ENCODE measurements at regions of chr22 and their contacts with region 1.

Region 1: DNA sequence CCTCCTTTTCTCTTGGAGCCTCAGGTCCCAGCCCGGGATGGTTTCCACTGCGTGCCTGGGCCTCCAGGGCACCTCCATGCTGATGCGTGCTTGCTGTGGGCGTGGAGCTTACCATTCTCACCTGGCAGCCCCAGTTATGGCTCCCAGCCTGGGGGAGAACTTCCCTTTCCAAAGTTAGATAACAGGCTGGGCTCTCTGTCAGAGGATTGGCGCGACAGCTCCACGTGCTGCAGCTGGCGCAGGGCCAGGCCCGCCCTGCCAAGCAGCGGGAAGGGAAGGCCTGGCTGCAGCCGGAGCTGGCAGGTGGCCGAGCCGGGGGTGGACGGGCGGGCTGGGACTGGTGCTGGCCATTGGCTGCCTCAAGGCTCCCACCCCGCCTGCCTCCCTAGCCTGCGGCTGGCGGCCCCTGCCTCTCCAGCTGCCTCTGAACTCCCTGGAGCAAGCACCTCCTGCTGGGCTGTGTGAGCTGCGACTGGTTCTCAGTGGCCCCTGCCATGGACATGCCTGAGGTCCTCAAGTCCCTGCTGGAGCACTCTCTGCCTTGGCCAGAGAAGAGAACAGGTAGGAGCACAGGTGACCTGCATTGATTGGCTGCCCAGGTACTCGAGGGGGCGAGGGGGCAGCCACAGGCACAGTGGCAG is 14.6 kb upstream of the TEF start:
- DNase-seq: peak; percentile 96 to 99 (median 98)
- H3K4me3 ChIP-seq: peak overlapping the region; percentile 44 to 90 (median 73)
- H3K27ac ChIP-seq: peak overlapping the region; percentile 76 to 99 (median 96)
- H3K27me3 ChIP-seq: no peaks in the 10 kb centered on the region
- CTCF ChIP-seq: peak in 51 of 56 donors; percentile 7 to 70 (median 50)

Region 2: DNA sequence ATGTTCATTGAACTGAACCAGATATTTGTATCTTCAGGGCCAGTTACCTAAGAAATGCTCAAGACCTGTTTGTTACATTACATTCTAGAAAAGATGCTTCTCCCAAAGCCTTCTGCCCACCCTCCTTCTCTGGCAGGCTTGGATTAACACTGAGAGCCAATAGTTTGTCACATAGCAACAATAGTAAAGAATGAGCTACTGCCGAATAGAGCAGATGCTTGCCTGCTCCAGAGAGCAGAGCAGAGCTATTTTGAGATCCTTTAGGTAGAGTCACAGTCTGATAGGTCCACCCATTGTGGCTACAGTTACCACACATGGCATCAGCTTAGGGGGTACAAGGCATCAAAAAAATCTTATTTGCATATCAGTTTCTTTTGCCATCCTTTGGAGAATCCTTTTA is 288.2 kb before region 1 on chr22:
- intact Hi-C with region 1: no loop called
- DNase-seq: no peak
- H3K4me3 ChIP-seq: no peak overlapping the region
- H3K27ac ChIP-seq: peak overlapping the region in 1 of 59 donors; percentile 3
- H3K27me3 ChIP-seq: no peaks in the 10 kb centered on the region
- CTCF ChIP-seq: no peak

Region 3: DNA sequence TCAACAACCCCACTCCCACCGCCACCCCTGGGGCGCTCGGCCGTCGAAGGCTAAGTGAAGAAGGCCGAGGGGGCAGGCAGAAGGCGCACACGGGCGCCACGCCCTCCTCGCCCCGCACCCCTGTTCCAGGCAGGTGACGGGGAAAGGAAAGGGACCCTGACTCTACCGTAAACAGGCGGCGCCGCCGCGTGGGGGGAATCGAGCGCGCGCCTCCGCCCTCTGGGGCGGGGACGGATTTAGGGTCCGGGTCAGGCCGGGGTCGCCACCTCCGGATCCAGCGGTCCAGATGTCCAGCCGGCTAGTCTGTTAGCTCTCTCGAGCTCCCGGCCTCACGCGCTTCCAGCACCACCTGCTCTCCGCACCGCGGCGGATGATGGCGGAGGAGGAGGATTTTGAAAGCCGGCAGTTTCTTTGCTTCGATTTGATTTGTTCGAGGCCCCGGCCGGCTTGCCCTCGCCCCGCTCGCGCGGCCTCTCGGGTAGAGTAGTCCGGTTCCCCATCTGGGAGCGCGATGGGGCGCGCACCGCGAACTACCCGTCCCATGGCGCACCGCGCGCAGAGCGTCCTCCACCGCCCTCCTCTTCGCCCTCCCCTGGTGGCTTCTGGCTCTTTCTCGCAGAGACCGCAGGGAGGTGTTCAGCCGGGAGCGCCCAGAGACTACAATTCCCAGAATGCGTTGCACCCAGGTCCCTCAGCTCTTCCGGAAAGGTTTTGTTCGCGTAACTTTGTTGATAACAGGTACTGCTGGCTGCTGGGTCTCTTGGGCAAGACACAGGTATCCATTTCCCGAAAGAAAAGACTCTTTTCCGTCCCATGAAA is 81.1 kb before region 1 on chr22 and contains the start of gene RANGAP1:
- intact Hi-C with region 1: loop called (anchors 5 kb)
- DNase-seq: peak; percentile 96 to 100 (median 99)
- H3K4me3 ChIP-seq: peak within 1 kb of the TSS; percentile 68 to 99 (median 94)
- H3K27ac ChIP-seq: peak within 1 kb of the TSS; percentile 75 to 99 (median 97)
- H3K27me3 ChIP-seq: no peaks in the 10 kb centered on the region
- CTCF ChIP-seq: peak in 32 of 56 donors; percentile 2 to 66 (median 34)
- total RNA-seq, gene RANGAP1: 115 to 243 (median 177) TPM

Region 4: GRCh38 chr22:41301105-41302020 is 65.8 kb before region 1 on chr22 and contains the start of gene ZC3H7B:
- intact Hi-C with region 1: loop called (anchors 2 to 5 kb)
- DNase-seq: peak; percentile 61 to 87 (median 78)
- H3K4me3 ChIP-seq: peak within 1 kb of the TSS; percentile 62 to 98 (median 90)
- H3K27ac ChIP-seq: peak within 1 kb of the TSS; percentile 66 to 96 (median 91)
- H3K27me3 ChIP-seq: no peaks in the 10 kb centered on the region
- CTCF ChIP-seq: peak in 55 of 56 donors; percentile 22 to 72 (median 56)
- total RNA-seq, gene ZC3H7B: 84.4 to 177 (median 117) TPM

Region 5: DNA sequence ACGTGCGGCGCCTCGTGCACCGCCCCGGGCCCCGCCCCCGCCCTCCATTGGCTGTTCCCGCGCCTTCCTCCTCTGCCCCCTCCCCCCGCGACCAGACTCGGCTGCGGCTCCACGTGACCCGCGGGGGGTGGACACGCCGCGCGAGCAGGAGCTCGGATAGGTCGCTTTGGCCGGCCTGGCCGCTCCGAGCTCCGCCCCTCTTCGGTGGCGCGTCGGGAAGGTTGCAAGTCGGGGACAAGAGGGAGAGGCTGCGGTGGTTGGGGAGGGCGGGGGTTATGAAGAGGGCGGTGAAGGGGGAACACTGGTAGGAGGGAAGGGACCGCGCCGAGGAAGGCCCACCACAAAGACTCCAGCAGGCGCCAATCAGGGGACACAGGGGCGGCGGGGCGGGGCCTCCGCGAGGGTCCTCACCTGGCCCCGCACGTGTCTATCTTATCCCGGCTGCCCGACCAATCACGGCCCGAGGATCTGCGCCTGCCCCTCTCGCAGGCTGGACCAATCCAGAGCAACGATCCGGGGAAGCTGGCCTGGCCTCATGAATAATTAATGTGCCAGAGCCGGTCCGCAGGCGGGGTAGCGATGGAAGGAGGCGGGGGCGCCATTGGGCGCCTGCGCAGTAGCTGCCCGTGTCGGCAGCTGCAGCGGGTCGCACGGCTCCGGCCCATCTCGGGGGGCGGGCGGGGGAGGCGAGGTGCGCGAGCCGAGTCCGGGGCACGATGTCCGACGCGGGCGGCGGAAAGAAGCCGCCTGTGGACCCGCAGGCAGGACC is 14.4 kb after region 1 on chr22 and contains the start of gene TEF:
- intact Hi-C with region 1: loop called in 1 of 2 experiments (anchors 2 kb)
- DNase-seq: peak; percentile 98 to 100 (median 99)
- H3K4me3 ChIP-seq: peak within 1 kb of the TSS; percentile 65 to 96 (median 86)
- H3K27ac ChIP-seq: peak within 1 kb of the TSS; percentile 96 to 100 (median 99)
- H3K27me3 ChIP-seq: no peaks in the 10 kb centered on the region
- CTCF ChIP-seq: no peak
- total RNA-seq, gene TEF: 47.8 to 173 (median 111) TPM

Region 6: GRCh38 chr22:41403532-41404318 is 36.6 kb after region 1 on chr22:
- intact Hi-C with region 1: loop called in 1 of 2 experiments (anchors 5 kb)
- DNase-seq: peak; percentile 97 to 100 (median 98)
- H3K4me3 ChIP-seq: peak overlapping the region in 19 of 59 donors; percentile 2 to 38 (median 12)
- H3K27ac ChIP-seq: peak overlapping the region; percentile 86 to 100 (median 98)
- H3K27me3 ChIP-seq: no peaks in the 10 kb centered on the region
- CTCF ChIP-seq: peak; percentile 92 to 100 (median 99)

Measured in dorsolateral prefrontal cortex (tissue), 120 donors.